ENCODE measurements at regions of chr1 and their contacts with region 1.

Region 1: DNA sequence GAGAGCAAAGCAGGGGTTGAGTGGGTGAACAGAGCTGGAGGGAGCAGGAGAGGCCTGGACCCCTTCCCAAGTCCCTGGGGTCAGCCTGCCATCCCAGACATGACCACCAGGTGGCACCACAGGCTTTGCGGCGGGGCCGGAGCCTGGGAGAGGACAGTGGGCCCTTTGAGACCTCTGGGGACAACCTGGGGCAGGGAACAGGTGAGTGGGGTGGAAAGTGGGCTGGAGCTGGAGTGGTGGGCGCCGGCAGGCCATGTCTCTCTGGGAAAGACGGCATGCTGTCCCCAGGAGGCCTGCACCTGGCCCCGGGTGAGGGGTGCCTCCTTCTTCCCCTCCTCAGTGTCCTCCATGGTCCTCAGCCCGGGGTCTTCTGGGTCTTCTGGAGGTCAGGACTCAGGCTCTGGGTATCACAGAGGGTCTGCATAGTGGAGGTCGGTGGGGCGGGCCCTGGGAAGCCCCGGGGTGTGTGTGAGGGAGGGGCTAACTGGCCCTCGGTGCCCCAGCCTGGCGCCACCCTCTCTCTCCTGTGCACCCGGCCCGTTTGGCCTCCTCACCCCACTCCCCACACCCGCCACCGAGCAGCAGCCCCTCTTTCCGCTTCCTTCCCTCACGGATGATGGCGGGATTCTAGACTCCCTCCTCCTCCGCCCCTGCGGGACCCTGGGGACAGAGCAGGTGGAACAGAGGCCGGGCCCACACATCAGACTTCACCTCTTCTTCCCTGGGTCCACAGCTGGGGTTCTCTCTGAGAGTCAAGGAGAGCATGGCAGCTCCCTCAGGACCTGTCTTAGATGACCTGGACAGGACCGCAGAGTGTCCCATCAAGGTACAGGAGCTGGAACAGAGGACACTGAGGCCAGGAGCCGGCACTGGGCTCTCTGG is 28.4 kb upstream of the PKP1 start:
- DNase-seq: peak in 7 of 10 donors; percentile 36 to 80 (median 64)
- H3K4me3 ChIP-seq: no peak overlapping the region
- H3K27ac ChIP-seq: no peak overlapping the region
- H3K27me3 ChIP-seq: peaks cover 0 to 13% (median 6%) of the 10 kb centered on the region in 45 donors
- CTCF ChIP-seq: peak in 55 of 56 donors; percentile 82 to 99 (median 97)

Region 2: GRCh38 chr1:201349092-201349491 is 94.2 kb after region 1 on chr1:
- intact Hi-C with region 1: no loop called
- DNase-seq: peak in 3 of 10 donors; percentile 16 to 41 (median 30)
- H3K4me3 ChIP-seq: no peak overlapping the region
- H3K27ac ChIP-seq: no peak overlapping the region
- H3K27me3 ChIP-seq: peaks cover 0 to 9% (median 0%) of the 10 kb centered on the region in 45 donors
- CTCF ChIP-seq: no peak

Region 3: DNA sequence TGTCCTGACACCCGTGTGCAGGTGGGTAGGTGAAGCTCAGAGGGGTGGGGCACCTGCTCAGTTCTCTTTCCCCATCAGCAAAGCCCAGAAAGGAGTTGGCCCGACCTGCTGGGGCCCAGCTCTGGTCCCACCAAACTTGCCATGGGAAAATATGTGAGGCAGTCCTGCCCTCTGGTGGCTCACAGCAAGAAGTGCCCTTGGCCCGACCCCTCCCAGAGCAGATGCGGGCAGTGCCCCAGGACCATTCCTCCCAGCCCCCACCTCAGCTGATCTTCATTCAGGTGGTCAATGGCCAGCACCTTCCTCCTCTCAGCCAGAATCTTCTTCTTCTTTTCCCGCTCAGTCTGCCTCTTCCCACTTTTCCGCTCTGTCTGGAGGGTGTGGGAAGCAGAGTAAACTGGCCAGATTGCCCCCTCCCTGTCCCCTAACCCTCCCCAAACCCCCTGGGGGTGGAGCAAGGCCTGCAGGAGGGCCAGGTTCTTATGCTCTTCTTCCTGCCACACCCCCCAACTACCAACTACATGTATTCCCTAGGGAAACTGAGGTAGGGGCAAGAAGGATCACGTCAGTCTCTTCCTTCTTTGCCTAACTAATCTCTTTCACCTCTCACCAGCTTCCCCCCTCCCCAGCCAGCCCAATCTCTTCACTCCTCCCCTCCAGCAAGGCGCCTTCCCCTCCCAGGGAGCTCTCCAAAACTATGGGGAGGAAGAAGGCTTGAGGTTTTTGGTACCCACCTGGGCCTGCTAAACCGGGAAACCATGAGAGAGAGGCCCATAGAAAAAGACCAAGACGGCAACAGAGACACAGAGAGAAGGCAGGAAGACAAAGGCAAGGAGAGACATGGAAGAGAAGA is 107.0 kb after region 1 on chr1:
- intact Hi-C with region 1: loop called (anchors 1 to 2 kb)
- DNase-seq: peak in 7 of 10 donors; percentile 27 to 57 (median 46)
- H3K4me3 ChIP-seq: no peak overlapping the region
- H3K27ac ChIP-seq: no peak overlapping the region
- H3K27me3 ChIP-seq: no peaks in the 10 kb centered on the region
- CTCF ChIP-seq: peak; percentile 39 to 93 (median 82)

Region 4: DNA sequence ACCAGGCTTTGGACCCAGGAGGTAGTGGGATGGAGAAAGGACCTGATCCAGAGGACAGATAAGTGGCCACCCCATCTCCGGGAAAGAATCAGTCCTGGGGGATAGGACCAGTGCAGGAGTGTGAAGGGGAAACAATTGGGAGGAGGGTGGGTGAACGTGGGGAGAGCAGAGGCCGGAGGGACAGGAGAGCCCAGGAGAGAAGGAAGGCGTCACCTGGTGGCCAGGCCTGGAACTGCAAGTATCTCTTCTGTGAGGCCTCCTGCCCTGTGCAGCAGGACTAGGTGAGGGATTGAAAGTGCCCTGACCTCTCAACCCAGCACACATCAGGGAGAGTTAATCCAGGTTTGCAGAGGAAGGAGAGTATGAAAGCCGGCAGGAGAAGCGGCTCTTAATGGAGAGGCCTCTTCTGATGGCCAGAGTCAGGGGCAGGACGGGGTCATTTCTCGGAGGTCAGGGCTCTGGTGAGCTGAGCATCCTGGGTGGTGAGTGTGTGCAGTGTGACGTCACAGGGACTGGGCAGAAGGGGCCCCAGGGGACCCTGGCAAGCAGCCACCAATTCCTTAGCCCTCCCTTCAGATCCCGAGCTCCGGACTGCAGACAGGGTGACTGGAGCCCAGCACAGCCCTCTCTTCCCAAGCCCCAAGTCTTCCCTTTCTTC is 153.4 kb after region 1 on chr1:
- intact Hi-C with region 1: loop called in 1 of 2 experiments (anchors 2 kb)
- DNase-seq: peak; percentile 58 to 85 (median 78)
- H3K4me3 ChIP-seq: no peak overlapping the region
- H3K27ac ChIP-seq: no peak overlapping the region
- H3K27me3 ChIP-seq: peaks cover 0 to 4% (median 0%) of the 10 kb centered on the region in 45 donors
- CTCF ChIP-seq: peak; percentile 51 to 90 (median 83)

Region 5: DNA sequence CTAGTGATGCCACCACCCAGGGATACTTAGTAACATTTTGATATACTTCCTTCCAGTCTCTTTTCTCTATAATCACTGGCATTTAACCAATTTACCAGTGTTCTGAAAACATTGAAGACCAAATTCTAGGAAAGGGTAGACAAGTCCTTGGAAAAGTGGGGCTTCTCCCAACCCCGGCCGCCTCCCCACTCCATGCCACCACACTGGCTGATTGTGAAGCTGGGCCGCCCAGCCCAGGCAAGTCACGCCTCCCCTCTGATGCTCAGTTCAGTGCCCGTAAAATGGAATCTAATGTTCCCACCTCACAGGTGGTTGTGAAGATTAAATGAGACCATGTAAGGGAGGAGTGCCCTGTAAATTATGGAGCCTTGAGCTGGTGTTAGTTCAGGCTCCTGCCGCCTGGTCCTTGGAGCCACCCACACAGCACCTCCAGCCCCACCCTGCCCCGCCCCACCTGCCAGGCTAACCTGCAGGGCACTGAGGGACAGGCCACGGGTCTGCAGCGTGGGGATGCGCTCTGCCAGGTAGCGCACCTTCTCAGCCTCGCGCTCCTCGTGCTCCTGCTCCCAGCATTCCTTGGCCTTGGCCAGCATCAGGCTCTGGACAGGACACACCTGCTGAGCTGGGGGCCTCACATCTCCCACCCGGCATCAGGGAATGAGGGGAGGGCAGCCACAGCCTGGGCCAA is 159.3 kb after region 1 on chr1:
- intact Hi-C with region 1: loop called in 1 of 2 experiments (anchors 2 kb)
- DNase-seq: no peak
- H3K4me3 ChIP-seq: no peak overlapping the region
- H3K27ac ChIP-seq: no peak overlapping the region
- H3K27me3 ChIP-seq: peaks cover 0 to 4% (median 0%) of the 10 kb centered on the region in 45 donors
- CTCF ChIP-seq: no peak

Region 6: DNA sequence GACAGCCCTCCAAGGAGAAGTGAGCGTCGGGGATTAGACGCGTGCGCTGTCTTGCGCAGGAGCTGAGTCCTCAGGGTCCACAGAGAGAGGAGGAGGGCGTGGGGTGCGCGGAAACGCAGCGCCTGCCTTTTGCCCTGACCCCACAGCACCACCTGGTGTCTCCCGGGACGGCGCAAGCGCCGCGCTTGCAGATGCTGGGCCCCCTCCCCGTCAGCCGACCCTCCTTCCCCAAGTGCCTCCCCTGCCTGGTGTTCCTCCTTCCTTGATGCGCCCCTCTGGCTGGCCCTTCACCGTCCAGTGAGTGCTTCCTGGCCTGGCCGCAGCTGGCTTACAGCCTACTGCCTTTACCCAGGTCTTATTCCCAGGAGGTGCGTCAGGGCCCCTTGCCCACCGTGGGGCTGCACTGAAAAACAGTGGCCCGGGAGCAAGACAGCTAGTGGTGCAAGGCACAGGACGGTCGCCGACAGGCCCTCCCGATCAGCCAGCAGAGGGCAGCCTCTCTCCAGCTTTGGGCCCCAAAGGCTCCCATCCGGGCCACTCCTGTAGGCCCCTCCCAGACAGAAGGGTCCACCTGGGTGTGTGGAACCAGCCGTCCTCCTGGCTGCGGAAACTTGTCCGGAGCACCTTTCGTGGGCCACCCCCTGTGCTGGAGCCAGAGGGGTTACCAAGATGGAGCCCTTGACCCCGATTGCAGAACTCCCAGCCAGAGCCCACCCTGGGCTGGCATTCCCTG is 227.1 kb after region 1 on chr1:
- intact Hi-C with region 1: loop called in 1 of 2 experiments (anchors 5 kb)
- DNase-seq: peak; percentile 45 to 93 (median 86)
- H3K4me3 ChIP-seq: peak overlapping the region in 49 of 59 donors; percentile 1 to 61 (median 41)
- H3K27ac ChIP-seq: peak overlapping the region; percentile 27 to 100 (median 89)
- H3K27me3 ChIP-seq: peaks cover 0 to 9% (median 0%) of the 10 kb centered on the region in 45 donors
- CTCF ChIP-seq: peak; percentile 59 to 99 (median 95)

Region 7: GRCh38 chr1:201530741-201531531 is 276.1 kb after region 1 on chr1:
- intact Hi-C with region 1: no loop called
- DNase-seq: peak in 9 of 10 donors; percentile 84 to 90 (median 88)
- H3K4me3 ChIP-seq: peak overlapping the region in 15 of 59 donors; percentile 3 to 38 (median 24)
- H3K27ac ChIP-seq: peak overlapping the region in 53 of 59 donors; percentile 0 to 81 (median 57)
- H3K27me3 ChIP-seq: no peaks in the 10 kb centered on the region
- CTCF ChIP-seq: peak; percentile 42 to 95 (median 88)